Dendritic cell treated with granulocyte-macrophage colony-stimulating factor and Interleukin-4, amounts not matched to agents 40 ng/mL and 50 ng/mL, for 4 days (primary cell): ENCODE measurements at regions of chr17 and their contacts with region 1.

Region 1: DNA sequence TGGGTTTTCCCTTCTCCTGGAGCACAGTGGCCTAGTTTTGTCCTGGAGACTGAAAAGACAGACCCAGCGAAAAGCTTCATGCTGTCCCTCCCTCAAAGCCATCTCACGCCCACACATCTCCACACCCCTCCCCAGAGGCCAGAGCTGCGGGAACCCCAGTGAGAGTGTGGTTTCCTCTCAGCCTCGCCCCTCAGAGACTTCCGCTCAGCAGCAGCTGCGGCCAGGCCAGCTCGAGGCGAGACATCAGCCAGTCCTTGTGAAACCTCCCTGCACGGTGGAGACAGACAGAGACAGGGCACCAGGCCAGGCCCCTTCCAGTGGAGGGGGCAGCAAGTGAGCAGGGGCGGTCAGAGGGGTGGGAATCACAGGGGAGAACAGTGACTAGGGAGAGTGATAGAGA is 77.0 kb upstream of the TNRC6C start:
- H3K4me3 Mint-ChIP-seq: peak overlapping the region; percentile 37
- H3K27ac Mint-ChIP-seq: peak overlapping the region; percentile 76
- H3K4me1 Mint-ChIP-seq: peaks cover 72% of the 10 kb centered on the region
- H3K27me3 Mint-ChIP-seq: peaks cover 66% of the 10 kb centered on the region

Region 2: GRCh38 chr17:77769215-77769614 is 112.3 kb before region 1 on chr17:
- intact Hi-C with region 1: no loop called
- H3K4me3 Mint-ChIP-seq: no peak overlapping the region
- H3K27ac Mint-ChIP-seq: no peak overlapping the region
- H3K4me1 Mint-ChIP-seq: peaks cover 10% of the 10 kb centered on the region
- H3K27me3 Mint-ChIP-seq: peaks cover 63% of the 10 kb centered on the region

Region 3: GRCh38 chr17:77899498-77899897 is 18.0 kb after region 1 on chr17:
- intact Hi-C with region 1: no loop called
- H3K4me3 Mint-ChIP-seq: no peak overlapping the region
- H3K27ac Mint-ChIP-seq: no peak overlapping the region
- H3K4me1 Mint-ChIP-seq: peaks cover 5% of the 10 kb centered on the region
- H3K27me3 Mint-ChIP-seq: peaks cover 86% of the 10 kb centered on the region

Region 4: GRCh38 chr17:77914385-77915254 is 33.1 kb after region 1 on chr17:
- intact Hi-C with region 1: loop called (anchors 5 kb)
- H3K4me3 Mint-ChIP-seq: no peak overlapping the region
- H3K27ac Mint-ChIP-seq: no peak overlapping the region
- H3K4me1 Mint-ChIP-seq: peaks cover 36% of the 10 kb centered on the region
- H3K27me3 Mint-ChIP-seq: peaks cover 92% of the 10 kb centered on the region

Region 5: DNA sequence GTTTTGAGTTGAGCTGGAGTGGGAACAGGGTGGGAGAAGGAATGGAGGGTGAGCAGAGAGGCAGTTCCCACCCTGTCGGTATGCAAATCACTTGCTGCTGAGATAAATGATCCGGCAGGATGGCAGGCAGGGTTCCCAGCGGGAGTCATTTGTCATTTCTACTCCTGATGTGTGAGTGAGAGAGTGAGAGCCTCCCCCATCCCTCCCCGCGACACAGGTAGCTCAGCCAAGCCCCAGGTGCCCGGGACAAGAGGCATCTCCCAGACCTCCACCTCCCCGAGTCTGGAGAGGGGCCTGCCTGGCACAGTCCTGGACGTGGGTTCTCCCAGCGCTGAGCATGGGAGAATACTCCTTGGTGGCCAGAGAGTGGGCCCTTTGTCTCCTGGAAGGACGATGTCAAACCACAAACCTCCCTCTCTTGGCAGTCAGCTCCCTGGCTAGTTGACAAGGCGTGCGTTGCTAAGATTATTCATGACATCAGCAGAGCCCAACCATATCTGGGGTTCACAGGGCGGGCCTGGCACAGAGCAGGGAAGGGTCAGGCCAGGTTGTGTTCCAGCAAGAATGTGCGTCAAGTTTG is 43.3 kb after region 1 on chr17:
- intact Hi-C with region 1: no loop called
- H3K4me3 Mint-ChIP-seq: no peak overlapping the region
- H3K27ac Mint-ChIP-seq: no peak overlapping the region
- H3K4me1 Mint-ChIP-seq: no peaks in the 10 kb centered on the region
- H3K27me3 Mint-ChIP-seq: peaks cover 94% of the 10 kb centered on the region